ENCODE measurements at regions of chr1 and their contacts with region 1.

Region 1: GRCh38 chr1:240149484-240150094 is 57.9 kb downstream of the FMN2 start:
- DNase-seq: no peak
- H3K4me3 ChIP-seq: no peak overlapping the region
- H3K27ac ChIP-seq: no peak overlapping the region
- H3K4me1 ChIP-seq: no peaks in the 10 kb centered on the region
- H3K27me3 ChIP-seq: no peaks in the 10 kb centered on the region
- CTCF ChIP-seq: peak; percentile 63 to 77 (median 69)
- EP300 ChIP-seq: no peak
- POLR2A ChIP-seq: no peak

Region 2: GRCh38 chr1:240027059-240027462 is 122.5 kb before region 1 on chr1:
- in situ Hi-C with region 1: loop called in 3 of 4 experiments (anchors 10 to 25 kb)
- intact Hi-C with region 1: loop called (anchors 10 kb)
- DNase-seq: peak; percentile 49
- H3K4me3 ChIP-seq: no peak overlapping the region
- H3K27ac ChIP-seq: no peak overlapping the region
- H3K4me1 ChIP-seq: peaks cover 0 to 3% (median 0%) of the 10 kb centered on the region in 4 donors
- H3K27me3 ChIP-seq: no peaks in the 10 kb centered on the region
- CTCF ChIP-seq: peak; percentile 80 to 92 (median 84)
- EP300 ChIP-seq: no peak
- POLR2A ChIP-seq: no peak

Region 3: GRCh38 chr1:240285541-240285940 is 136.0 kb after region 1 on chr1:
- in situ Hi-C with region 1: no loop called
- intact Hi-C with region 1: no loop called
- DNase-seq: no peak
- H3K4me3 ChIP-seq: no peak overlapping the region
- H3K27ac ChIP-seq: no peak overlapping the region
- H3K4me1 ChIP-seq: peaks cover 0 to 26% (median 8%) of the 10 kb centered on the region in 4 donors
- H3K27me3 ChIP-seq: no peaks in the 10 kb centered on the region
- CTCF ChIP-seq: no peak
- EP300 ChIP-seq: no peak
- POLR2A ChIP-seq: no peak